Heart left ventricle (tissue), 16 donors: ENCODE measurements at regions of chr2 and their contacts with region 1.

Region 1: DNA sequence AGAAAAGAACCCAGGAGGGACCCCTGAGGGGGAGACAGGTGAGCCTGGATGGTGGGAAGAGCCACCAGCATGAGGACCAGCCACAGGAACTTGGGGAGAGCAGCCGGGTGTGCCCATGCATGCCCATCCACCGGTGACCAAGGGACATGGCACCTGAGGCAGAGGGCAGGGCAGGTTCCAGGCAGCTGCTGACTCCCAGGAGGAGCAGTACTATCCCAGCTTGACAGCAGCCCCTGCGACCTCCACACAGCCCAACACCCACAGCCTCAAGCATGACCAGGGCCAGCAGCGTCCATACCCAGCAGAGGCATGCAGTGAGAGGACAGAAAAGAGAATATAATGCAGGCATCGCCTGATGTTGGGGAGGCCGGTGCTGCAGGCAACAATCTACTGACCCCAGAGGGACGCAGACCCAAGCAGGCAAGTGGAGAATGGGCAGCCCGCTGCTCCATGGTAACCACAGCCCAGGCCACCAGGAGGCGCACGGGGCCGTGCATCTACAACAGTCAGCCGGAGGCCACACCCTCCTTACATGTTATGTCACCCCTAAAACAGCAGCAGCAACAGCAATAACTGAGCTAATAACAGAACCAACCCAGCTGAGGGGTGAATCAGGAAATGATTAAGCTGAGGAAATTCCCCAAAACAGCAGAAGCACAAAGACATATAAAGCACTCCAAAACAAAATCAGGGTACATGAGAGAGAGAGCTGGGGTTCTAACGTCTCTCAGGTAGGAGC is 44.1 kb downstream of the ANKMY1 start:
- DNase-seq: peak; percentile 74 to 90 (median 86)
- ATAC-seq: peak; percentile 65 to 96 (median 93)
- H3K4me3 ChIP-seq: no peak overlapping the region
- H3K27ac ChIP-seq: no peak overlapping the region
- H3K4me1 ChIP-seq: peaks cover 0 to 9% (median 1%) of the 10 kb centered on the region in 12 donors
- H3K27me3 ChIP-seq: no peaks in the 10 kb centered on the region
- CTCF ChIP-seq: peak; percentile 76 to 87 (median 80)
- POLR2A ChIP-seq: no peak

Region 2: GRCh38 chr2:240480834-240481623 is 32.7 kb before region 1 on chr2:
- intact Hi-C with region 1: no loop called
- DNase-seq: peak in 3 of 5 donors; percentile 5 to 54 (median 22)
- ATAC-seq: no peak
- H3K4me3 ChIP-seq: no peak overlapping the region
- H3K27ac ChIP-seq: no peak overlapping the region
- H3K4me1 ChIP-seq: no peaks in the 10 kb centered on the region
- H3K27me3 ChIP-seq: no peaks in the 10 kb centered on the region
- CTCF ChIP-seq: no peak
- POLR2A ChIP-seq: no peak

Region 3: DNA sequence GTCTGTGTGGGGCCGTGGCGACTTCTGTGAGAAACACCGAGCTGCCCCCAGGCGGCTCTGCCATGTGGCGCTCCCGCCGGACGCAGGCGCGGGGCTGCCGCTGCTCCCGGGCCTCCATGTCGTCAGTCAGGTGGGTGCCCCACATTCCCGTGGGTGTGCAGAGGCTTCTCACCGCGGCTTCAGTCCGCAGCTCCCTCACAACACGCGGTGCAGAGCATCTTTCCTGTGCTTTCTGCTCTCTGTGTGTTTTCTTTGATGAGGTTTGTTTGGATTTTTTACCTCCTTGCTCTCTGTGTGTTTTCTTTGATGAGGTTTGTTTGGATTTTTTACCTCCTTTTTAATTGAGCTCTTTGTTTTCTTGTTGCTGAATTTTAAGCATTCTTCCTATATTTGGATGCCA is 190.9 kb after region 1 on chr2:
- intact Hi-C with region 1: loop called in 9 of 10 experiments (anchors 5 to 10 kb)
- DNase-seq: peak in 3 of 5 donors; percentile 10 to 29 (median 11)
- ATAC-seq: no peak
- H3K4me3 ChIP-seq: no peak overlapping the region
- H3K27ac ChIP-seq: no peak overlapping the region
- H3K4me1 ChIP-seq: peaks cover 0 to 7% (median 0%) of the 10 kb centered on the region in 12 donors
- H3K27me3 ChIP-seq: peaks cover 0 to 45% (median 5%) of the 10 kb centered on the region in 9 donors
- CTCF ChIP-seq: no peak
- POLR2A ChIP-seq: no peak

Region 4: DNA sequence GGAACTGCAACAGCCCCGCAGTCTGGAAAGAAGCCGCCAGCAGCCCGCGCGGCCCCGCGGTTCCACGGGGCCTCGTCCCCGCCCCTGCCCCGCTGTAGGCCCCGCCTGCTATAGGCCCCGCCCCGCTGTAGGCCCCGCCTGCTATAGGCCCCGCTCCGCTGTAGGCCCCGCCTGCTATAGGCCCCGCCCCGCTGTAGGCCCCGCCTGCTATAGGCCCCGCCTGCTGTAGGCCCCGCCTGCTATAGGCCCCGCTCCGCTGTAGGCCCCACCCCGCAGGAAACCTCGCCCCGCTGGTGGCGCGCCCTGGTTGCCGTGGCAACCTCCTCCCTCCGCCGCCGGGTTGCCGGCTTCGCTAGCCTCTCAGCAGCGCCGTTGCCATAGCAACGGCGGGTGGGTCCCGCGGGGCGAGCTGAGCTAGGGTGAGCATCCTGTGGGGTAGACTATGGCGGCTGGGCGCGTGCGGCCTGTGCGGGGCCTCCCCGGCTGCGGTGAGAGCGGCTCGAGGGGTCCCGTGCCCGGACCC is 318.5 kb after region 1 on chr2:
- intact Hi-C with region 1: loop called in 2 of 10 experiments (anchors 10 kb)
- DNase-seq: peak; percentile 88 to 97 (median 93)
- ATAC-seq: peak; percentile 60 to 89 (median 87)
- H3K4me3 ChIP-seq: peak overlapping the region in 10 of 12 donors; percentile 20 to 52 (median 40)
- H3K27ac ChIP-seq: no peak overlapping the region
- H3K4me1 ChIP-seq: peaks cover 0 to 15% (median 8%) of the 10 kb centered on the region in 12 donors
- H3K27me3 ChIP-seq: peaks cover 0 to 40% (median 11%) of the 10 kb centered on the region in 9 donors
- CTCF ChIP-seq: no peak
- POLR2A ChIP-seq: no peak

Region 5: GRCh38 chr2:240840435-240841080 is 326.8 kb after region 1 on chr2:
- intact Hi-C with region 1: loop called in 6 of 10 experiments (anchors 5 to 10 kb)
- DNase-seq: peak in 4 of 5 donors; percentile 52 to 68 (median 55)
- ATAC-seq: peak; percentile 74 to 86 (median 80)
- H3K4me3 ChIP-seq: no peak overlapping the region
- H3K27ac ChIP-seq: no peak overlapping the region
- H3K4me1 ChIP-seq: peaks cover 0 to 4% (median 0%) of the 10 kb centered on the region in 12 donors
- H3K27me3 ChIP-seq: peaks cover 0 to 14% (median 0%) of the 10 kb centered on the region in 9 donors
- CTCF ChIP-seq: peak; percentile 39 to 69 (median 55)
- POLR2A ChIP-seq: no peak